ENCODE measurements at regions of chr1 and their contacts with region 1.

Region 1: DNA sequence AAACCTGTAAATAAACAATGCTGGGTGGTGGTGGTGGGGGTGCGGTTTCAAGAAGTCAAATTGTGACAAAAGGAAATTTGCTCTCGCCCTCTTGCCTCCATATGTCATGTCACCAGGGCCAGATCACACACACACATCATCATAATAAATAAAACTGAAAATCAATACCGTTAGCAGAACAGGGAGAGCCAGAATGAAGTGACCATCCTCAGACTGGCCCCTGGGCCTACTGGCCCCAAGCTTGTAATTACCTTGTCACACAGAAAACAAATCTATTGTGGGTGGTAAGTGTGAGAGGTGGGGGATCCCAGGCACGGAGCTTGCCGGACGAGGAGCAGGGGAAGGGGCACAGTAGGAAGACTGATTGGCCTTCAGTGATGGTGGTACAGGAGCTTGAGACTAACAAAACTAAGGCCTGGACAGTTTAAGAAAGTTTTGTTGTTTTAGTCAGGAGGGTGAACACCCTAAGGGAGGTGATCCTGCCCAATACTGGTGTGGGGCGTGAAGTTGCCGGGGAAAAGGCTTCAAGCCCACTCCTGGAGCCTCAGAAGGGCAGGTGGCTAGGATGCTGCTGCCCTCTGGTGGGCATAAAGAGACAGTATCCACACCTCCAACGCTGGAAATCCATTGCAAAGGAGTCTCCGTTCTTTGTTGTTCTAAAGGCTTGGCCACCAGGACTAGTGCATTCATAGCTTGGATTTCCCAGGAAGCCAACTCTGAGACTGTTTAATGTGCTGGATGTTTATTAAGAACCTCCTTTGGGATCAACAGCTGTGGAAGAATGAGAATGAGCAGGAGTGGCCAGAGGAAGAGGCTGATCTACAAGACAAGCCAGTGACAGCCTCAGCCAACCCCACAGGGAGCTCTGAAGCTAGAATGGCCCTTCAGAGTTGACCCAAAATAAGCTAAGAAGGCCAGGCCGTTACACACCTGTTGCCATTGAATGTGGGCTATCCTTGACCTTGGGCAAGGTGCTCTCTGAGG is 8.1 kb upstream of the C1orf216 start:
- DNase-seq: no peak
- H3K4me3 ChIP-seq: no peak overlapping the region
- H3K27me3 ChIP-seq: no peaks in the 10 kb centered on the region
- CTCF ChIP-seq: peak; percentile 89

Region 2: DNA sequence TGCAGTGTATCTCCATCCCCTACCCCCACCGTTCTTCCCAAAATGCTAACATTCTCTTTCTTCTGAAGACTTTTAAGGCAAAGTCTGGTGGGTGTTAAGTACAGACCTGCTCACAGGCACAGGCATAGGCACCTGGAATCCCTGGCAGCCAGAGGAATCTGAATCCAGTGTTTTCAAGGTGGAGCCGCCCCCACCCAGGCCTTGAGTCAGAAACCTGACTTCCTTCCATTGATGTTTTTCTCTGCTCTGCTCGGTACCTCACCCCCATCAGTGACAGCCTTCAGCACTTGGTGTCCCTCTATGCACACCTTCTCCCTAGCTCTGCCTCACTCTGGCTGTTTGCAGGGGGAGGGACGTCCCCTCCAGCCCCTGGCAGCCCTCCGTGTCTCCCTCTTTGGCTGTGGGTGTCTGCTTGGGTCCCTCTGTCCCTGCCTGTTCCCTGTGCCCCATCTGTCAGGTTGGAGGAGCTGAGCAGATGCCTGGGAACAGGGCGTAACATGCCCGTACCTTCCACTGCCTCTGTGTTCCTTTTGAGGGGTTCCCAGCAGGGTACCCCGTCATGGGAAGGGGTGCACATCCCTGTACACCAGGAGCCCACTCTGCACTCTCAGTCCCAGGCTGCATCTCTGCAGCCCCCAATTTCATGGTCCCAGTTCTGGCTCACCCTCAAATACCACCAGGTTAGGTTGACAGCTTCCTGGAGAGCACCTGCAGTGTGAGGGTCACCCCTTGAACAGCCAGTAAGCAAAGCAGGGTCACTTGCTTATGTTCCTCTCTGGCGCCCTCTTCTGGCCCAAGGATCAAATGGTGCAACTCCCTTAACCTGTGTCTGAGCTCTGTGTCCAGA is 162.5 kb before region 1 on chr1:
- CTCF ChIA-PET with region 1: interaction called, 105 read pairs
- POLR2A ChIA-PET with region 1: no interaction called
- DNase-seq: no peak
- H3K4me3 ChIP-seq: no peak overlapping the region
- H3K27me3 ChIP-seq: no peaks in the 10 kb centered on the region
- CTCF ChIP-seq: peak; percentile 86

Region 3: DNA sequence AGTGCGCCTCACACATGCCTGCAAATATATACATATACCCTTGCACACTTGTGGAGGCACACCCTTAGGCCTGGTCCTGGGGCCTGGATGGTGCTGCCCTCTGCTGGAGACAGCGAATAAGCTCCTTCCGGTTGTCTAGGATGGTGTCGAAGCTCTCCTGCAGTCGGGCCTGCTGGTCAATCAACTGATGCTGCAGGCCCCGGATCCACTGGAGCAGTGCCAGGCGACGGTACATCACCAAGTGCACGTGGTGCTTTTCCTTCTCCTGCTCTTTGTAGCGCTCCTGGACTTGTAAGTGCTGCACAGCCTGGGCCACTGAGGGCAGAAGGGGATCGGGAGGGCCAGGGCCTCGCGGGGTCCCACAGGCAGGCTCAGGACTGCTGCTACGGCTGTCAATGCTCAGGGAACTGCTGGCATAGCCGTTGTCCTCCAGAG is 11.2 kb before region 1 on chr1:
- CTCF ChIA-PET with region 1: interaction called, 75 read pairs
- POLR2A ChIA-PET with region 1: no interaction called
- DNase-seq: no peak
- H3K4me3 ChIP-seq: no peak overlapping the region
- H3K27me3 ChIP-seq: no peaks in the 10 kb centered on the region
- CTCF ChIP-seq: peak; percentile 94

Region 4: GRCh38 chr1:35747938-35748702 is 21.4 kb after region 1 on chr1:
- CTCF ChIA-PET with region 1: interaction called, 22 read pairs
- POLR2A ChIA-PET with region 1: no interaction called
- DNase-seq: no peak
- H3K4me3 ChIP-seq: no peak overlapping the region
- H3K27me3 ChIP-seq: no peaks in the 10 kb centered on the region
- CTCF ChIP-seq: no peak

Region 5: GRCh38 chr1:35769188-35769758 is 42.5 kb after region 1 on chr1:
- CTCF ChIA-PET with region 1: interaction called, 14 read pairs
- POLR2A ChIA-PET with region 1: no interaction called
- DNase-seq: peak; percentile 40
- H3K4me3 ChIP-seq: peak overlapping the region; percentile 58
- H3K27me3 ChIP-seq: no peaks in the 10 kb centered on the region
- CTCF ChIP-seq: peak; percentile 40; the same call in 1 of the 2 replicates

Region 6: GRCh38 chr1:35958558-35958957 is 231.8 kb after region 1 on chr1:
- CTCF ChIA-PET with region 1: no interaction called
- POLR2A ChIA-PET with region 1: no interaction called
- DNase-seq: no peak
- H3K4me3 ChIP-seq: no peak overlapping the region
- H3K27me3 ChIP-seq: no peaks in the 10 kb centered on the region
- CTCF ChIP-seq: no peak